ENCODE measurements at regions of chr17 and their contacts with region 1.

Region 1: DNA sequence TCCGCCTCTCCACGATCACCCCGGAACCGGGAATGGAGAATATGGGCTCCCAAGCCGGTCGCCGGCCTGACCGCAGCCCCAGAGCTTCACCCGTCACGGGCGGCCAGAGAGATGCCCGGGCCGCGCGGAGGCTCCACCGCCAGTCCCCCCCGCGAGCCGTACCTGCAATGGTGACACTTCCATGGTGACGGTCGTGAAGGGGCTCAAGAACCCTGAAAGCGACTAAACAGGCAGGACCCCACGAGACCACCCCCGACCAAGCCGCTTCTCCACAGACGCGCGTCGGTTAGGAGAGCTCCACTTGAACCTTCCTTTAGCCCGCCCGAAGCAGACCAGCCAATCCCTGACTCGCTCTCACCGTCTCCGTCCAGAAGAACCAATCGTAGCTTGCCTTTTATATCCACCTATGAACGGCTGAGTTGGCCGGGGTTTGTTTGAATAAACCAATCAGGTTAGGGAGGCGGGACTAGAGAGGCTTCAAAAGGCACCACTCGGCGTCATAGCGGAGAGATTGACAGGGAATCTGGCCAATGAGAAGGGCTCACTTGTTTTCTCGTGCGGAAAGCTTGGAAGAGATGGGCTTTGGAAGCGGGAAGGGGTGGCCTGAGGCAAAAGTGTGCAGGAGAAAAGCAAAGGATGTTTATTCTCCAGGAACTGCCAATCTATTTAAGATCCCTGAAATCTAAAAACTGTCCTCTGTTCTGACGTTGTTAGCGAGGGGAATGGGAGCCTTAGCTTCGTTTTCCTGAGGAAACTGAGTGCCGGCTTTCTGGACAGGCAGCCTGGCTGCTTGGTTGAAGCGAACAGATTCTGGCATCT is at the start of gene TOP2A:
- DNase-seq: peak; percentile 86 to 99 (median 94)
- ATAC-seq: peak; percentile 99
- H3K4me3 ChIP-seq: peak within 1 kb of the TSS; percentile 72
- H3K4me3 Mint-ChIP-seq: peak within 1 kb of the TSS; percentile 87
- H3K27ac ChIP-seq: peak within 1 kb of the TSS in 1 of 2 donors; percentile 29
- H3K27ac Mint-ChIP-seq: peak within 1 kb of the TSS; percentile 74
- H3K4me1 ChIP-seq: peaks cover 32% of the 10 kb centered on the region
- H3K4me1 Mint-ChIP-seq: peaks cover 28% of the 10 kb centered on the region
- H3K27me3 ChIP-seq: peaks cover 0 to 4% of the 10 kb centered on the region in 2 experiments
- H3K27me3 Mint-ChIP-seq: no peaks in the 10 kb centered on the region
- CTCF ChIP-seq: no peak
- total RNA-seq, gene TOP2A: 3.6 to 3.8 TPM

Region 2: DNA sequence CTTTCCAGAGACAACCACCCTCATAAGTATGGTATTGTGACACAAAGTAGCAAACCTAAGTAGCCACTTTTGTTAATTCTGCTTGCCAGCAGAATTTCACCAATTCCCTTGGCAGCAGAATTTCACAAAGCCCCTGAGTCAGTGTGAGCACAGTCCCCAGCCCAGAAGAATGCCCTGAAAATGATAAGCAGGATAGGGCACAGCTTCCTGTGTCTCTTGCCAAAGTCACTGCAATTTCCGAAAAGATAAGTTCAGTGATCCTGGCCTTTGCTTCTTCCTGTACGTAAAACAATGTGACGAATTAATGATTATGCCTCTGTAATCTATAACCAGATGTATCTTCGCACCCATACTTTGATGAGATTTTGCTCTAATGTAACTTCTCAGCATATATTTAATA is 214.7 kb before region 1 on chr17:
- CTCF ChIA-PET with region 1: no interaction called
- POLR2A ChIA-PET with region 1: no interaction called
- intact Hi-C with region 1: loop called in 1 of 2 experiments (anchors 5 kb)
- DNase-seq: no peak
- ATAC-seq: no peak
- H3K4me3 ChIP-seq: no peak overlapping the region
- H3K4me3 Mint-ChIP-seq: no peak overlapping the region
- H3K27ac ChIP-seq: no peak overlapping the region
- H3K27ac Mint-ChIP-seq: no peak overlapping the region
- H3K4me1 ChIP-seq: peaks cover 7% of the 10 kb centered on the region
- H3K4me1 Mint-ChIP-seq: peaks cover 5% of the 10 kb centered on the region
- H3K27me3 ChIP-seq: no peaks in the 10 kb centered on the region
- H3K27me3 Mint-ChIP-seq: peaks cover 9% of the 10 kb centered on the region
- CTCF ChIP-seq: no peak

Region 3: GRCh38 chr17:40303009-40303657 is 114.7 kb before region 1 on chr17:
- CTCF ChIA-PET with region 1: no interaction called
- POLR2A ChIA-PET with region 1: interaction called, 6 read pairs
- intact Hi-C with region 1: loop called in 1 of 2 experiments (anchors 2 kb)
- DNase-seq: peak in 8 of 14 experiments; percentile 46 to 83 (median 61)
- ATAC-seq: peak; percentile 67
- H3K4me3 ChIP-seq: no peak overlapping the region
- H3K4me3 Mint-ChIP-seq: no peak overlapping the region
- H3K27ac ChIP-seq: no peak overlapping the region
- H3K27ac Mint-ChIP-seq: no peak overlapping the region
- H3K4me1 ChIP-seq: peaks cover 33% of the 10 kb centered on the region
- H3K4me1 Mint-ChIP-seq: peaks cover 16% of the 10 kb centered on the region
- H3K27me3 ChIP-seq: no peaks in the 10 kb centered on the region
- H3K27me3 Mint-ChIP-seq: no peaks in the 10 kb centered on the region
- CTCF ChIP-seq: peak; percentile 93

Region 4: DNA sequence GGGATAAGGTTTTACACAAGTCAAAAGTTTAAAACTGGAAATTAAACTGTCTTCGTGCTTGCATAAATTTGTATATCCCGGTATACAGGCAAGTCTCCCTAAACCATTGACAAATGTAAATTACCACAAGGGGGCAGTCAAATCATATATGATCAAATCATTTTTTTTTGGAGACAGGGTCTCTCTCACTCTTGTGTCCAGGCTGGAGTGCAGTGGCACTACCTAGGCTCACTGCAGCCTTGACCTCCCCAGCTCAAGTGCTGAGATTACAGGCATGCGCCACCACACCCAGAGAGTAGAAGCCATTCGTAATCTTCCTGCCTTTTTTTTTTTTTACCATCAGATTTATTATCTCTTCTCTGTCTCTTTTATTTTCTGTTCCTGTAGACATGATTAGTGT is 18.6 kb before region 1 on chr17:
- CTCF ChIA-PET with region 1: no interaction called
- POLR2A ChIA-PET with region 1: interaction called, 3 read pairs
- intact Hi-C with region 1: loop called in 1 of 2 experiments (anchors 2 kb)
- DNase-seq: peak in 5 of 14 experiments; percentile 7 to 80 (median 52)
- ATAC-seq: peak; percentile 71
- H3K4me3 ChIP-seq: no peak overlapping the region
- H3K4me3 Mint-ChIP-seq: no peak overlapping the region
- H3K27ac ChIP-seq: no peak overlapping the region
- H3K27ac Mint-ChIP-seq: no peak overlapping the region
- H3K4me1 ChIP-seq: peaks cover 3% of the 10 kb centered on the region
- H3K4me1 Mint-ChIP-seq: peaks cover 22% of the 10 kb centered on the region
- H3K27me3 ChIP-seq: no peaks in the 10 kb centered on the region
- H3K27me3 Mint-ChIP-seq: no peaks in the 10 kb centered on the region
- CTCF ChIP-seq: peak; percentile 91

Region 5: DNA sequence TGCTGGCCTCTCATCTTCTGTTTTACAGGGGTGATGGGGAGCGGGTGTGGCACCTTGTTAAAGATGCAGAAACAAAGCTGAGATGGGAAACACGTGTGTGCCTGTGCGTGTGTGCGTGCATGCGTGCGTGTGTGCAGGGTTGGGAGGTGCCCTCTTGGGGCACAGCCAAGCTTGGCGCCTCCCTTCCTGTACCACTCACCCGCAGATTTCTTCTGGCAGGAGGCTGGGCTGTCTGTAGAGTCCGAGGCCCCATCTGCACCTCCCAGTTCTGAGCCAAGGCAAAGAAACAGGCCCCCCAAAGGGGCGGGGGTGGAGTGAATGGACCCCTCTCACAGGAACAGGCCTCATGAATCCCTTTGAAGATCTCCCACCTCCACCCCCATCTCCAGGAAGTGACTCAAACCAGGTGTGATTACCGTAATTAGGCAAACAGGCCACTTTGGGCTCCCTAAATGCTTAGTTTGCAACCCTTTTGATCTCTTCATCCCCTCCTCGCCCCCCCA is 62.7 kb after region 1 on chr17:
- CTCF ChIA-PET with region 1: interaction called, 3 read pairs
- POLR2A ChIA-PET with region 1: interaction called, 14 read pairs
- intact Hi-C with region 1: no loop called
- DNase-seq: peak; percentile 71 to 96 (median 83)
- ATAC-seq: peak; percentile 87
- H3K4me3 ChIP-seq: no peak overlapping the region
- H3K4me3 Mint-ChIP-seq: peak overlapping the region; percentile 68
- H3K27ac ChIP-seq: peak overlapping the region; percentile 57 to 71
- H3K27ac Mint-ChIP-seq: peak overlapping the region; percentile 97
- H3K4me1 ChIP-seq: peaks cover 80% of the 10 kb centered on the region
- H3K4me1 Mint-ChIP-seq: peaks cover 67% of the 10 kb centered on the region
- H3K27me3 ChIP-seq: no peaks in the 10 kb centered on the region
- H3K27me3 Mint-ChIP-seq: no peaks in the 10 kb centered on the region
- CTCF ChIP-seq: no peak

Region 6: GRCh38 chr17:40551879-40552768 is 134.3 kb after region 1 on chr17:
- CTCF ChIA-PET with region 1: interaction called, 3 read pairs
- POLR2A ChIA-PET with region 1: interaction called, 26 read pairs
- intact Hi-C with region 1: no loop called
- DNase-seq: peak in 6 of 14 experiments; percentile 39 to 76 (median 44)
- ATAC-seq: no peak
- H3K4me3 ChIP-seq: no peak overlapping the region
- H3K4me3 Mint-ChIP-seq: peak overlapping the region; percentile 55
- H3K27ac ChIP-seq: peak overlapping the region in 1 of 2 donors; percentile 100
- H3K27ac Mint-ChIP-seq: peak overlapping the region; percentile 92
- H3K4me1 ChIP-seq: peaks cover 99% of the 10 kb centered on the region
- H3K4me1 Mint-ChIP-seq: peaks cover 99% of the 10 kb centered on the region
- H3K27me3 ChIP-seq: no peaks in the 10 kb centered on the region
- H3K27me3 Mint-ChIP-seq: no peaks in the 10 kb centered on the region
- CTCF ChIP-seq: no peak

Measured in CD4-positive, alpha-beta T cell (primary cell).